ENCODE measurements at regions of chr2 and their contacts with region 1.

Region 1: DNA sequence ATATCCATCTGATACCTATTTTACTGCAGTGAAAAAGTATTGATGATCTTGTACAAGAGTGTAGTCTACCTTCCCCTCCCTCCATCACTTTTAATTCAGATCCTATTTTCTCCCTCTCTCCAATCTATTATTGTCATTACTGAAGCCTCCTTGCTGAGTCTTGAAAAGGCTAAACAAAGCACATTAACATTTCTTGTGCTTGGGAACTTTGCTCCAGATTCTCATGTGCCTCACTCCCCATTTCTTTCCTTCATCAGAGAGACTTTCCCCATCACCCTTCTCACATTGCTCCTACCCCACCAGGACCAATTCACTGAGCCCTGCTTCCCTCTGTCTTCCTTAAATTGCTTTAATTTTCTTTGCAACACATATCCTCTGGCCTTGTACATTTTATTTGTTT is 736.2 kb upstream of the GCFC2 start:
- DNase-seq: no peak
- ATAC-seq: no peak
- H3K4me3 ChIP-seq: no peak overlapping the region
- H3K27ac ChIP-seq: no peak overlapping the region
- H3K4me1 ChIP-seq: no peaks in the 10 kb centered on the region
- H3K27me3 ChIP-seq: no peaks in the 10 kb centered on the region
- CTCF ChIP-seq: no peak
- EP300 ChIP-seq: no peak
- POLR2A ChIP-seq: no peak
- RAD21 ChIP-seq: no peak

Region 2: DNA sequence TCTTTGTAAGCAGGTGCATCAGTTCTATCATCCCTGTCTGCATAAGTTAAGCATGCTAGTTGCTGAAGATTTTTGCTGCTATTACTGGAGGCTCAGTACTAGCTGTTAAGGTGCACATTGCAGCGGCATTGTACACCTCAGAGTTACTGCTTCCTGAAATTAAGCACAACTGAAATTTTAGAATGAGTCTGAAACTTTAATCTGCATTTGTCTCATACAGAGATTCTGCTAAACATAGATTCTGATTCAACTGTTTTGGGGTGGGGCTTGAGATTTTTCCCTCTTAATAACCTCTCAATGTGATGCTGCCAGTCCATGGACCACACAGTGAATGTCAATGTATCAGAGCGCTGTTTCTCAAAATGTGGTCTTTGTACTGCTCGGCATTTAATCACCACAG is 150.4 kb before region 1 on chr2:
- CTCF ChIA-PET with region 1: no interaction called
- POLR2A ChIA-PET with region 1: no interaction called
- in situ Hi-C with region 1: no loop called
- intact Hi-C with region 1: no loop called
- DNase-seq: no peak
- ATAC-seq: no peak
- H3K4me3 ChIP-seq: no peak overlapping the region
- H3K27ac ChIP-seq: no peak overlapping the region
- H3K4me1 ChIP-seq: no peaks in the 10 kb centered on the region
- H3K27me3 ChIP-seq: no peaks in the 10 kb centered on the region
- CTCF ChIP-seq: no peak
- EP300 ChIP-seq: no peak
- POLR2A ChIP-seq: no peak
- RAD21 ChIP-seq: no peak

Region 3: GRCh38 chr2:76415821-76416220 is 31.1 kb before region 1 on chr2:
- CTCF ChIA-PET with region 1: no interaction called
- POLR2A ChIA-PET with region 1: no interaction called
- in situ Hi-C with region 1: no loop called
- intact Hi-C with region 1: no loop called
- DNase-seq: no peak
- ATAC-seq: no peak
- H3K4me3 ChIP-seq: no peak overlapping the region
- H3K27ac ChIP-seq: no peak overlapping the region
- H3K4me1 ChIP-seq: 0 out of 2 replicates have a peak, but pooled peaks cover 4% of the 10 kb centered on the region
- H3K27me3 ChIP-seq: no peaks in the 10 kb centered on the region
- CTCF ChIP-seq: no peak
- EP300 ChIP-seq: no peak
- POLR2A ChIP-seq: no peak
- RAD21 ChIP-seq: no peak

Region 4: GRCh38 chr2:76478266-76479035 is 31.6 kb after region 1 on chr2:
- CTCF ChIA-PET with region 1: no interaction called
- POLR2A ChIA-PET with region 1: no interaction called
- in situ Hi-C with region 1: no loop called
- intact Hi-C with region 1: loop called (anchors 1 kb)
- DNase-seq: no peak
- ATAC-seq: no peak
- H3K4me3 ChIP-seq: no peak overlapping the region
- H3K27ac ChIP-seq: no peak overlapping the region
- H3K4me1 ChIP-seq: no peaks in the 10 kb centered on the region
- H3K27me3 ChIP-seq: no peaks in the 10 kb centered on the region
- CTCF ChIP-seq: no peak
- EP300 ChIP-seq: no peak
- POLR2A ChIP-seq: no peak
- RAD21 ChIP-seq: no peak

Measured in HepG2 (cell line).